ENCODE measurements at regions of chr20 and their contacts with region 1.

Region 1: DNA sequence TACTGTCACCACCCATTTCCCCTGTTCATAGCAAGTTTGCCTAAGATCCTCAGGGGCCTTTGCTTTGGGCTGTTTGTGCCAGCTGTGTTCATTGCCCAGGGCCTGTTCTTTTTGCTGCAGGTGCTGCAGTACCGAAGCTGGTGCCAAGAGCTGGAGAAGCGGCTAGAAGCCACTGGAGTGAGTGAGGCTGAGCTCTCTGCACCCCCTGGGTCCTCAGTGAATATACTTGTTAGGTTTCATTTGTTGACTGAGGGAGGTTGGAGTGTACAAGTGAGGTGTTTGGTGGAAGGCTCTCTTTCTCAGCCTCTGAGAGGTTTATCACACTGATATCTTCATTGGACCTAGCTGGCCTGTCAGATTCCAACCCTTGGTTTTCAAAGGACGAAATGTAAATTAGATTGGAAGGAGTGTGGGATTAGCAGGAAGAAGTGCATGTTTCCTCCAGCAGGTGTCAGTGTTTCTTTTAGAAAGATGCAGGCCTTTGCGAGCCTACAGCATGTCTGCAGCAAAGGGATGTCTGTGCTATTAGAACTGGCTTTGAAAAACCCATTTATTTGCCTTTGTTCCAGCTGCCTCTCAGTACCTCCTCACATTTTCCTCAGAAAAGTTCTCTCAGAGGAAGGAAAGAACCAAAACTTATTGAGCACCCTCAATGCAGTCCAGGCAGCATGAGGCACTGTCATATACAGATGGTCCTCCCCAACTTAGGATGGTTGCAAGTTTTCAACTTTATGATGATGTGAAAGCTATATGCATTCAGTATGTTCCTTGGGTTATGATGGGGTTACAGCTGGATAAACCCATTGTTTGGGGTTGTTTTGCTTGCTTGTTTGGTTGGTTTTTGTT is 8.3 kb downstream of the CEP250 start:
- DNase-seq: no peak
- ATAC-seq: peak; percentile 84
- H3K4me3 Mint-ChIP-seq: no peak overlapping the region
- H3K27ac Mint-ChIP-seq: no peak overlapping the region
- H3K4me1 Mint-ChIP-seq: peaks cover 13% of the 10 kb centered on the region
- H3K27me3 Mint-ChIP-seq: no peaks in the 10 kb centered on the region
- CTCF ChIP-seq: no peak

Region 2: GRCh38 chr20:35478804-35479472 is 15.3 kb after region 1 on chr20:
- CTCF ChIA-PET with region 1: interaction called, 12 read pairs
- POLR2A ChIA-PET with region 1: interaction called, 4 read pairs
- intact Hi-C with region 1: no loop called
- DNase-seq: no peak
- ATAC-seq: peak; percentile 81
- H3K4me3 Mint-ChIP-seq: no peak overlapping the region
- H3K27ac Mint-ChIP-seq: peak overlapping the region; percentile 51
- H3K4me1 Mint-ChIP-seq: peaks cover 8% of the 10 kb centered on the region
- H3K27me3 Mint-ChIP-seq: no peaks in the 10 kb centered on the region
- CTCF ChIP-seq: no peak

Region 3: GRCh38 chr20:35502352-35502751 is 38.7 kb after region 1 on chr20:
- CTCF ChIA-PET with region 1: interaction called, 13 read pairs
- POLR2A ChIA-PET with region 1: no interaction called
- intact Hi-C with region 1: loop called (anchors 5 kb)
- DNase-seq: peak; percentile 49
- ATAC-seq: peak; percentile 95
- H3K4me3 Mint-ChIP-seq: peak overlapping the region; percentile 44
- H3K27ac Mint-ChIP-seq: peak overlapping the region; percentile 68
- H3K4me1 Mint-ChIP-seq: peaks cover 55% of the 10 kb centered on the region
- H3K27me3 Mint-ChIP-seq: no peaks in the 10 kb centered on the region
- CTCF ChIP-seq: no peak

Region 4: DNA sequence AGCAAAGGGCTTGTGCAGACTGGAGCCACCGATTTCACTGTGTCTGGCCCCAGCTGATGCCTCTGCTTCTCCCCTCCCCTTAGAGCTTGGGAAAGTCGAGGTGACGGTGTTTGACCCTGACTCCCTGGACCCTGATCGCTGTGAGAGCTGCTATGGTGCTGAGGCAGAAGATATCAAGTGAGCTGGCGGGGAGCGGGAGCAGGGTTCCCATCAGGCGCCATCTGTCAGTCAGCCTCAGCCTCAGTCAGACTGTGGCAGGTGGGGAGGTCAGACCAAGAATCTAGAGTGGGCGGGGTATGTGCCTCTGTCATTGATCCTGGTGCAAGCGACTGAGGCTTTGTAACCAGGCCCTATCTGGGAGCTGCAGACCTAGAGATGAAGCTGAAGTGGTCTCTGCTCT is 83.7 kb after region 1 on chr20:
- CTCF ChIA-PET with region 1: no interaction called
- POLR2A ChIA-PET with region 1: no interaction called
- intact Hi-C with region 1: no loop called
- DNase-seq: no peak
- ATAC-seq: no peak
- H3K4me3 Mint-ChIP-seq: no peak overlapping the region
- H3K27ac Mint-ChIP-seq: no peak overlapping the region
- H3K4me1 Mint-ChIP-seq: peaks cover 5% of the 10 kb centered on the region
- H3K27me3 Mint-ChIP-seq: no peaks in the 10 kb centered on the region
- CTCF ChIP-seq: no peak

Region 5: GRCh38 chr20:35601008-35601973 is 137.6 kb after region 1 on chr20:
- CTCF ChIA-PET with region 1: interaction called, 4 read pairs
- POLR2A ChIA-PET with region 1: no interaction called
- intact Hi-C with region 1: loop called (anchors 5 kb)
- DNase-seq: peak; percentile 58
- ATAC-seq: peak; percentile 78
- H3K4me3 Mint-ChIP-seq: peak overlapping the region; percentile 81
- H3K27ac Mint-ChIP-seq: no peak overlapping the region
- H3K4me1 Mint-ChIP-seq: peaks cover 13% of the 10 kb centered on the region
- H3K27me3 Mint-ChIP-seq: peaks cover 29% of the 10 kb centered on the region
- CTCF ChIP-seq: no peak

Region 6: GRCh38 chr20:35883778-35884540 is 420.3 kb after region 1 on chr20:
- CTCF ChIA-PET with region 1: interaction called, 57 read pairs
- POLR2A ChIA-PET with region 1: no interaction called
- intact Hi-C with region 1: loop called (anchors 1 kb)
- DNase-seq: peak; percentile 28
- ATAC-seq: peak; percentile 85
- H3K4me3 Mint-ChIP-seq: no peak overlapping the region
- H3K27ac Mint-ChIP-seq: no peak overlapping the region
- H3K4me1 Mint-ChIP-seq: peaks cover 2% of the 10 kb centered on the region
- H3K27me3 Mint-ChIP-seq: no peaks in the 10 kb centered on the region
- CTCF ChIP-seq: no peak

Measured in activated B cell treated with CpG ODN at 0.5 μM for 24 hours (primary cell).